ENCODE measurements at regions of chr1 and their contacts with region 1.

Region 1: DNA sequence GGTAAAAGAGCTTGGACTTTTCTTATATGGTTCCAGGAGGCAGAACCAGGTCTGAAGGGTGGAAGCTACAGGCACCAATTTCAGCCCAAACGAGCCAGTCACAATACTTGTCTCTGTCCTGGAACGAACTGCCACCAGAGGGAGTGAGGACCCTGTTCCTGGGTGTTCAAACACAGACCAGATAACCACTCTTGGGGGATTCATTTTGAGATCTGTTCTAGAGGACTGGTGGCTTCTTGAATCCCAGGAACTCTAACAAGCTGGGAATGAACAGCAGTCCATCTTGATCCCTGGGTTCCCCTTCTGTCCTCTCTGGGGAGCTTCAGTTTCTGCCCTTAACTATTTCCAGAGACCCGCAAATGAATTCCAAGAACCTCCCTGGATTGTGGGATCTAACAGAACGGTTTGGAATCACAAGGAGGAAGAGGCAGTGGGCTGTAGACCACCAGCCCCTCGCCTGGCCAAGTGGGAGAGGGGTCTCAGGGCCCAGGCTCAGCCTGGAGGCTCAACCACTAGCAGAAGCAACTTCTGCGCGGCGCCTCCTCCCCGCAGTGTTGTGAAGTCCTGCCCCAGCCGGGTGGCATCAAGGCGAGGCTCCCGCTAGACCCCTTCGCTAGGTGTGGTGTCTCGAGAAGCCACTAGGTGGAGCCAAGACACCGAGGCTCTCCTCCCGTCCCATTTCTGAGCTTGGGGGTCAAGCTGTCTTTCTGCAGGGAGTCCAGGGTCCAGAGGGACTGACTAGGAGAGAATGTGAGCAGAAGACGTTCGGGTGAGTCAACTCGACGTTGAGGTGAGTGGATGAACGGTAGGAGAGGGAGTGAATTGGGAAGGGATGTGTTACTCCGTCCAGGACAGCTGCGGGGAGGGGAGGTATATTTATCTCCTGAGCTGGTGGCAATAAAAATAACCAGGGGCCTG is 12.1 kb upstream of the NES start:
- DNase-seq: no peak
- H3K4me3 ChIP-seq: peak overlapping the region; percentile 46
- CTCF ChIP-seq: peak; percentile 92

Region 2: DNA sequence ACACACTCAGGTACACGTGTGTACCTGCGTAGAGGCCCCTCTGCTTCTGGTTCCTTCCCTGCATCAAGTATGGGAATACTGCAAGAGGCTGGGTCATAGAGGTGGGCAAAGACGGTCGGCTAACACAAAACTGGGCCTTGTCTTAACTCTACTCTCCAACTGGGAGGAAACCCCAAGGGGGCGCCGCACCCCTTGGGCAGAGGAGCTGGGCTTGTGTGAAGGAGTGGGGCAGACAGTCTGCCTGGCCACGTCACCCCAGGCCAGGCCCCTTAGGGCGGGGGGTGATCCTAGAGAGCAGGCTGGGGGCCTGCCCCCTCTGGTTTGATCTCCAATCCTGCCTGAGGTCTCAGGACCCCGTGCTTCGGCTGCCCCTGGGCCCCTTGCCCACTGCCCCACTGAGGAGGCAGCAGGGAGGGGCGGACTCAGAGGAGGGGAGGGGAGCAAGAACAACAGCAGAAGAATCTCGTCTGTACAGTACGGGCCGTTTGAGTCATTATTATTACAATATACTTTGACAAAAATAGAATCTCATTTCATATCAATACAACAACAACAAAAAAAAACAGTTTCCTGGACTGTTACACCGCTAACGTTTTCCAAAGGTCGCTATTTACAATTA is 223.4 kb before region 1 on chr1:
- CTCF ChIA-PET with region 1: no interaction called
- POLR2A ChIA-PET with region 1: no interaction called
- DNase-seq: no peak
- H3K4me3 ChIP-seq: no peak overlapping the region
- CTCF ChIP-seq: peak; percentile 17

Region 3: GRCh38 chr1:156659994-156660751 is 29.1 kb before region 1 on chr1:
- CTCF ChIA-PET with region 1: interaction called, 506 read pairs
- POLR2A ChIA-PET with region 1: no interaction called
- DNase-seq: peak; percentile 77
- H3K4me3 ChIP-seq: no peak overlapping the region
- CTCF ChIP-seq: peak; percentile 100

Region 4: GRCh38 chr1:156751758-156752757 is 62.8 kb after region 1 on chr1:
- CTCF ChIA-PET with region 1: interaction called, 12 read pairs
- POLR2A ChIA-PET with region 1: no interaction called
- DNase-seq: peak; percentile 72
- H3K4me3 ChIP-seq: peak overlapping the region; percentile 96
- CTCF ChIP-seq: peak; percentile 39

Region 5: GRCh38 chr1:156781585-156782186 is 92.4 kb after region 1 on chr1:
- CTCF ChIA-PET with region 1: interaction called, 17 read pairs
- POLR2A ChIA-PET with region 1: no interaction called
- DNase-seq: no peak
- H3K4me3 ChIP-seq: no peak overlapping the region
- CTCF ChIP-seq: no peak

Region 6: GRCh38 chr1:156869455-156869854 is 180.2 kb after region 1 on chr1:
- CTCF ChIA-PET with region 1: interaction called, 11 read pairs
- POLR2A ChIA-PET with region 1: no interaction called
- DNase-seq: no peak
- H3K4me3 ChIP-seq: no peak overlapping the region
- CTCF ChIP-seq: no peak

Region 7: DNA sequence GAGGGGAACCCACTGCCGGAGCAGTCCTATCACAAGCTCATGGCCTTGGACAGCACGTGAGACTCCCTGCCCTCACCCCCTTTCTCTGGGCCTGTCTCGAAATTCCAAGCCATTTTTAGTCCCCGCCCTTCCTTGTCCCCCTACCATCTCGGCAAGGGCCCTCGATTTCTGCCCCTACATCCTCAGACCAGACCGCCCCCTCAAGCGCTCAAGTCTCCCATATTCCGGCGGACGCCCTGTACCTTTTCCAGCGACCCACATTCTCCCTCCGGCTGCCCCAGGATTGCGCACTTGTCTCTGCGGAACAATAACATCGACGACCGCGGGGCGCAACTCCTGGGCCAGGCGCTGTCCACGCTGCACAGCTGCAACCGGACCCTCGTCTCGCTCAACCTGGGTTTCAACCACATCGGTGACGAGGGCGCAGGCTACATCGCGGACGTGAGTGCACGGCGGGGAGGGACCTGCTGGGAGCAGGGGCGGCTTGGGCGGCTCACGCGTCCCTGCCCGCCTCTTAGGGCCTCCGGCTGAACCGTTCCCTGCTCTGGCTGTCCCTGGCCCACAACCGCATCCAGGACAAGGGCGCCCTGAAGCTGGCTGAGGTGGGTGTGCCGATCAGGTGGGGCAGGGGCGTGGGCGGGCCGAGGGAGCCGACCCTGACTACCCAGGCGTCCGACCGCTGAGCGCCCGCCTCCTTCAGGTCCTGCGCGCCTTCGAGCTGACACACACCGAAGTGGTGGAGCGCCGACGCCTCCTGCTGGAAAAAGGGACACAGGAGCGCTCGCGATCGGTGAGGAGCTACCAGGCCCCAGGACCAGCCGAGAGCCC is 238.1 kb after region 1 on chr1:
- CTCF ChIA-PET with region 1: interaction called, 93 read pairs
- POLR2A ChIA-PET with region 1: no interaction called
- DNase-seq: no peak
- H3K4me3 ChIP-seq: peak overlapping the region; percentile 55
- CTCF ChIP-seq: peak; percentile 94

Measured in AG04449 (cell line).